ENCODE measurements at regions of chr3 and their contacts with region 1.

Region 1: DNA sequence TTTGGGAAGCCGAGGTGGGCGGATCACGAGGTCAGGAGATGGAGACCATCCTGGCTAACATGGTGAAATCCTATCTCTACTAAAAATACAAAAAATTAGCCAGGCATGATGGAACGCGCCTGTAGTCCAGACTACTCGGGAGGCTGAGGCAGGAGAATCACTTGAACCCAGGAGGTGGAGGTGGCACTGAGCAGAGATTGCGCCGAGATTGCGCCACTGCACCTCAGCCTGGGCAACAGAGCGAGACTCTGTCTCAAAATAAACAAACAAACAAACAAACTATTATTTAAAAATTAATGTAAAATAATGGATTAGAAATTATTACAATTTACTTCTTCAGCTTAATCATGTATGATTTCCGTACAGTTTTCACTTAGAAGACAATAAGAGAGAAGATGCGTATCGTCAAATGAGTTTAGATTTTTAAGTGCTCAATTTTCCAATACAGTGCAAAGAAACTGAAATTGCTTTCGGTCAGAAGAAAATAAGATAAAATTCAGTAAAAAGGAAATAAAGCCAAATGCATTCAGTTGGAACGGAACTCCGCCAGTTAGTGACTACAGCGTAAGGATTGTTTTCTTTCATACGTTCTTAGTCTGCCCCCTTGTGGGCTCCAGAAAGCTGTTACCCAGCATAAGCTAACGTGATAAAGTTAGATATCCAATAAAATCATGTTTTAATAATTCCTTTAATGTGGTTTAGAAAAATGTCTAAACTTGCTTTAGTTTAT is 24.8 kb downstream of the AADAC start:
- DNase-seq: peak; percentile 88
- ATAC-seq: peak; percentile 74
- H3K4me3 ChIP-seq: no peak overlapping the region
- H3K27ac ChIP-seq: no peak overlapping the region
- H3K4me1 ChIP-seq: peaks cover 10% of the 10 kb centered on the region
- H3K27me3 ChIP-seq: no peaks in the 10 kb centered on the region
- CTCF ChIP-seq: peak; percentile 89
- POLR2A ChIP-seq: no peak
- RAD21 ChIP-seq: peak; percentile 87

Region 2: GRCh38 chr3:151227807-151228665 is 610.7 kb before region 1 on chr3:
- CTCF ChIA-PET with region 1: interaction called, 6 read pairs
- POLR2A ChIA-PET with region 1: no interaction called
- dilution Hi-C with region 1: no loop called
- in situ Hi-C with region 1: no loop called
- intact Hi-C with region 1: loop called (anchors 1 kb)
- DNase-seq: peak; percentile 95
- ATAC-seq: peak; percentile 79
- H3K4me3 ChIP-seq: no peak overlapping the region
- H3K27ac ChIP-seq: peak overlapping the region; percentile 66
- H3K4me1 ChIP-seq: peaks cover 21% of the 10 kb centered on the region
- H3K27me3 ChIP-seq: no peaks in the 10 kb centered on the region
- CTCF ChIP-seq: peak; percentile 96
- POLR2A ChIP-seq: peak; percentile 67
- RAD21 ChIP-seq: peak; percentile 98

Region 3: DNA sequence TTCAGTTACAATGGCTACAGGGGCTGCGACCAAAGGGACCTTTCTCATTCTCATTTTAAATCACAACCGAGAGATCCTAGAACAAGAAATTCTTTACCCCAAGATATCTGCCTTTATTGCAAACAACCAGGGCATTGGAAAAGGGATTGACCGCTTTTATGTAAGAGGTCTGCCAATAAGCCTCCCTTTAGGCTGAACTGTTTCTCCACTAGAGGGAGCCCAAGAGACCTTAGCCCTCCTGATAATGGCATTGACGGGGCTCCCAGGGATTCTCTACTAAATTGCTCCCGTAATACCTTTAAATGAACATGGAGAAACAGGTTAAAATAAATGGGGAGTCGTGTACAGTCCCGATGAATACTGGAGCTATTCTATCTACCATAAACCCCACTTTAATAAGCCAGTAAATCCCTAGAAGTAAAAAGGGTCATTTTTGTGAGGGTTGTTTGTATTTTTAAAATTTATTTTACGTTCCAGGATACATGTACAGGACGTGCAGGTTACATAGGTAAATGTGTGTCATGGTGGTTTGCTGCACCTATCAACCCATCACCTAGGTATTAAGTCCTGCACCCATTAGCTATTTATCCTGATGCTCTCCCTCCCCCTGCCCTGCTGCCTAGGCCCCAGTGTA is 370.3 kb before region 1 on chr3:
- CTCF ChIA-PET with region 1: interaction called, 8 read pairs
- POLR2A ChIA-PET with region 1: no interaction called
- dilution Hi-C with region 1: no loop called
- in situ Hi-C with region 1: no loop called
- intact Hi-C with region 1: loop called (anchors 1 kb)
- DNase-seq: peak; percentile 62
- ATAC-seq: peak; percentile 83
- H3K4me3 ChIP-seq: no peak overlapping the region
- H3K27ac ChIP-seq: no peak overlapping the region
- H3K4me1 ChIP-seq: no peaks in the 10 kb centered on the region
- H3K27me3 ChIP-seq: no peaks in the 10 kb centered on the region; the same call in 1 of the 2 replicates
- CTCF ChIP-seq: peak; percentile 76
- POLR2A ChIP-seq: no peak
- RAD21 ChIP-seq: peak; percentile 68

Region 4: GRCh38 chr3:151903501-151903991 is 64.8 kb after region 1 on chr3:
- CTCF ChIA-PET with region 1: no interaction called
- POLR2A ChIA-PET with region 1: no interaction called
- dilution Hi-C with region 1: no loop called
- in situ Hi-C with region 1: no loop called
- intact Hi-C with region 1: loop called (anchors 5 kb)
- DNase-seq: peak; percentile 93
- ATAC-seq: peak; percentile 76
- H3K4me3 ChIP-seq: no peak overlapping the region
- H3K27ac ChIP-seq: peak overlapping the region; percentile 88
- H3K4me1 ChIP-seq: peaks cover 29% of the 10 kb centered on the region
- H3K27me3 ChIP-seq: no peaks in the 10 kb centered on the region
- CTCF ChIP-seq: no peak
- POLR2A ChIP-seq: no peak
- RAD21 ChIP-seq: no peak

Region 5: GRCh38 chr3:152444029-152444641 is 605.4 kb after region 1 on chr3:
- CTCF ChIA-PET with region 1: no interaction called
- POLR2A ChIA-PET with region 1: no interaction called
- dilution Hi-C with region 1: no loop called
- in situ Hi-C with region 1: no loop called
- intact Hi-C with region 1: loop called (anchors 10 kb)
- DNase-seq: peak; percentile 73
- ATAC-seq: peak; percentile 50; the same call in 1 of the 2 replicates
- H3K4me3 ChIP-seq: no peak overlapping the region
- H3K27ac ChIP-seq: no peak overlapping the region
- H3K4me1 ChIP-seq: peaks cover 4% of the 10 kb centered on the region
- H3K27me3 ChIP-seq: no peaks in the 10 kb centered on the region
- CTCF ChIP-seq: peak; percentile 64
- POLR2A ChIP-seq: no peak
- RAD21 ChIP-seq: peak; percentile 70

Measured in IMR-90 (cell line).